Ascending aorta (tissue), 2 donors: ENCODE measurements at regions of chr15 and their contacts with region 1.

Region 1: DNA sequence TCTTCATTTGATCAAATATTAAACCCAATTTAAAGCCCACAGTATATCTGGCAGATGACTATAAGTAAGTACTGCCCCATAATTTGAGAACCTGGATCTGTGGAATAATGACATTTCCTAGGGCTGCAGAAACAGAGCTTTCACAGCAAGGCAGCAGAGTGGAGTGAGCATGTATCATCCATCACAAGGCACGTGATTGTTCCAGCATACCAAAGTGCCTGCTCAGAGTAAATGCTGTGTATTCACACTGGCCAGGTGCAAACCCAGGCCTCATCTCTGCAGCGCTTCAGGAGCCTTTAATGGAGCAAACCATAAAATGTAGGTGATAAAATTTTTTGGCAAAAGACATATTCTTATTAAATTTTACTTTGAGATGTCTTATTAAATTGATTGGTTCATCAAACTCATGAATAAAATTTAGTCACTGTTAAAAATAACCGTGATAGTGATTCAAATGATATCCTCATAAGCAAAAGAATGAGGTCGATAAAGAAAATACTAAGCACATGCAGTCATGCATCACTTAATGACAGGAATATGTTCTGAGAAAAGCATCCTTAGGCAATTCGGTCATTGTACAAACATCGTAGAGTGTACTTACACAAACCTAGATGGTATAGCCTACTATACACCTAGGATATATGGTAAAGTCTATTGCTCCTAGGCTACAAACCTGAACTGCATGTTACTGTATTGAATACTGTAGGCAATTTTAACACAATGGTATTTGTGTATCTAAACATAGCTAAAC is 99.3 kb upstream of the SLC24A5 start:
- DNase-seq: no peak
- H3K4me3 ChIP-seq: no peak overlapping the region
- H3K27ac ChIP-seq: no peak overlapping the region
- H3K4me1 ChIP-seq: no peaks in the 10 kb centered on the region
- H3K27me3 ChIP-seq: no peaks in the 10 kb centered on the region
- CTCF ChIP-seq: no peak

Region 2: GRCh38 chr15:48084759-48085590 is 63.5 kb after region 1 on chr15:
- intact Hi-C with region 1: loop called (anchors 10 kb)
- DNase-seq: no peak
- H3K4me3 ChIP-seq: no peak overlapping the region
- H3K27ac ChIP-seq: no peak overlapping the region
- H3K4me1 ChIP-seq: peaks cover 0 to 7% of the 10 kb centered on the region in 2 donors
- H3K27me3 ChIP-seq: no peaks in the 10 kb centered on the region
- CTCF ChIP-seq: peak in 1 of 3 experiments; percentile 52